ENCODE measurements at regions of chr3 and their contacts with region 1.

Region 1: GRCh38 chr3:35275768-35276167 is 363.6 kb upstream of the ARPP21 start:
- DNase-seq: no peak
- ATAC-seq: no peak
- H3K4me3 ChIP-seq: no peak overlapping the region
- H3K27ac ChIP-seq: no peak overlapping the region
- H3K4me1 ChIP-seq: no peaks in the 10 kb centered on the region
- H3K27me3 ChIP-seq: no peaks in the 10 kb centered on the region
- CTCF ChIP-seq: no peak
- POLR2A ChIP-seq: no peak
- RAD21 ChIP-seq: no peak

Region 2: DNA sequence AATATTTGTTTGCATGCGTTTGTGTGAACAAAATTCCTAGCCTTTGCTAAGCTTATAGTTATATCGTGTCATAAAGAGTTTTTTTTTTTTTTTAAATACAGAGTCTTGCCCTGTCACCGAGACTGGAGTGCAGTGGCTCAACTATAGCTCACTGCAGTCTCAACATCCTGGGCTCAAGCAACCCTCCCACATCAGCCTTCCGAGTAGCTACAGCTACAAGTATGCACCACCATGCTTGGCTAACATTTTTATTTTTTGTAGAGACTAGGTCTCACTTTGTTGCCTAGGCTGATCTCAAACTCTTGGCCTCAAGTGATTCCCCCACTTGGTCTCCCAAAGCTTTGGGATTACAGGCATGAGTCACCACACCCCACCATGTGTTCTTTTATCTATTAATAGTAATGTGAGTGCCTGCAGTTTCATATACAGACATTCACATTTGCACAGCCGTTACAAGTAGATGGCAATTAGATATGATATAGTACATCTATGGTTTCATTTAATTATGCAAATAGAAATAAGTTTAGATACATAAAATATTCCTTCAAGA is 628.8 kb before region 1 on chr3:
- CTCF ChIA-PET with region 1: no interaction called
- POLR2A ChIA-PET with region 1: no interaction called
- dilution Hi-C with region 1: no loop called
- in situ Hi-C with region 1: no loop called
- intact Hi-C with region 1: no loop called
- DNase-seq: no peak
- ATAC-seq: no peak
- H3K4me3 ChIP-seq: no peak overlapping the region
- H3K27ac ChIP-seq: no peak overlapping the region
- H3K4me1 ChIP-seq: no peaks in the 10 kb centered on the region
- H3K27me3 ChIP-seq: no peaks in the 10 kb centered on the region
- CTCF ChIP-seq: no peak
- POLR2A ChIP-seq: no peak
- RAD21 ChIP-seq: no peak

Region 3: DNA sequence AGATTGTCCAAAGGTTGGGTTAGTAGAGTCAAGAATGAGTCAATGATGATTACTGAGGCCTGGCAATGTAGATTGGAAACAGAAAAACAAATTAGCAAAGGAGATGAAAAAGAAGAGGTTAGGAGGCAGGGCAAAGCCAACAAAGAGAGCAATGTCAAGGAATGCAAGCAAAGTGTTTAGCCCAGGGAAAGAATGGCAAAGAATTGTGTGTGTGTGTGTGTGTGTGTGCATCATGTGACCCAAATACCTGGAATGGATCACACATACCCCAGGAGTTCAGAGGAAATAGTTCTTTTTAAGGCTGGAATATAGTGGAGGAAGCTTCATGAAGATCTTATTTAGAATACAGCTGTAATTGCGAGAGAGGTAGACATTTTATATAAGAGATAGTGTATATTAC is 468.2 kb before region 1 on chr3:
- CTCF ChIA-PET with region 1: no interaction called
- POLR2A ChIA-PET with region 1: no interaction called
- dilution Hi-C with region 1: no loop called
- in situ Hi-C with region 1: no loop called
- intact Hi-C with region 1: no loop called
- DNase-seq: no peak
- ATAC-seq: no peak
- H3K4me3 ChIP-seq: no peak overlapping the region
- H3K27ac ChIP-seq: no peak overlapping the region
- H3K4me1 ChIP-seq: no peaks in the 10 kb centered on the region
- H3K27me3 ChIP-seq: no peaks in the 10 kb centered on the region
- CTCF ChIP-seq: no peak
- POLR2A ChIP-seq: no peak
- RAD21 ChIP-seq: no peak

Region 4: GRCh38 chr3:35335703-35336102 is 59.9 kb after region 1 on chr3:
- CTCF ChIA-PET with region 1: no interaction called
- POLR2A ChIA-PET with region 1: no interaction called
- dilution Hi-C with region 1: no loop called
- in situ Hi-C with region 1: no loop called
- intact Hi-C with region 1: loop called (anchors 10 kb)
- DNase-seq: no peak
- ATAC-seq: no peak
- H3K4me3 ChIP-seq: no peak overlapping the region
- H3K27ac ChIP-seq: no peak overlapping the region
- H3K4me1 ChIP-seq: no peaks in the 10 kb centered on the region
- H3K27me3 ChIP-seq: no peaks in the 10 kb centered on the region
- CTCF ChIP-seq: no peak
- POLR2A ChIP-seq: no peak
- RAD21 ChIP-seq: no peak

Measured in IMR-90 (cell line).